ENCODE measurements at regions of chr5 and their contacts with region 1.

Region 1: DNA sequence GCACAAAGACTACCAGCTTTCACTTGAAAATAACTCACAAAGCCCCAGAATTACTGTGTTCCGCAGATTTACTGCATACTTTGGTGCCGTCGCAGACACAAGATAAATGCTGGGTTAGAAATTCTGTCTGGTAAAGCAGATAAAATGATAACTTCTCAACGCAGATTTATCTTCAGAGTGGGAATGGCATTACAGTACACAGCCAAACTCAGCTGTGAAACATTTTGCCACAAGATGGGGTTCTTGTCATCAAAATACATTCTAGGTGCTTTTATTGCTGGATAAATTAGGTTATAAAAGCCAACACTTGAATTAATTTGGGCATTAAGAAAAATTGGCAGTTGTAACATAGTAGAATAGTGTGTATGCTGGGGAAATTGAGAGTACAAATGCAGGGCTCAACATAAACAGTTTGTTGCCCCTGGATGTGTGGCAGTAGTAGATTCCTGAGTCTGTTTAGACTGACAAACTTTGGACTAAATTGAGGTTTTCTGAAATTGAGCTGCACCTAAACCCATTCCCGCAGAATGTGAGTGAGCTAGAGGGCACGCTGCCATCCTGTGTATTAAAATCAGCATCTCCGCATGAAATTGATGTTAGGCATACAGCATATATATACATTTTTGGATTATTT is 61.1 kb downstream of the LMNB1 start:
- DNase-seq: no peak
- ATAC-seq: peak; percentile 64

Region 2: GRCh38 chr5:126477294-126478117 is 360.5 kb before region 1 on chr5:
- intact Hi-C with region 1: no loop called
- DNase-seq: no peak
- ATAC-seq: no peak

Region 3: DNA sequence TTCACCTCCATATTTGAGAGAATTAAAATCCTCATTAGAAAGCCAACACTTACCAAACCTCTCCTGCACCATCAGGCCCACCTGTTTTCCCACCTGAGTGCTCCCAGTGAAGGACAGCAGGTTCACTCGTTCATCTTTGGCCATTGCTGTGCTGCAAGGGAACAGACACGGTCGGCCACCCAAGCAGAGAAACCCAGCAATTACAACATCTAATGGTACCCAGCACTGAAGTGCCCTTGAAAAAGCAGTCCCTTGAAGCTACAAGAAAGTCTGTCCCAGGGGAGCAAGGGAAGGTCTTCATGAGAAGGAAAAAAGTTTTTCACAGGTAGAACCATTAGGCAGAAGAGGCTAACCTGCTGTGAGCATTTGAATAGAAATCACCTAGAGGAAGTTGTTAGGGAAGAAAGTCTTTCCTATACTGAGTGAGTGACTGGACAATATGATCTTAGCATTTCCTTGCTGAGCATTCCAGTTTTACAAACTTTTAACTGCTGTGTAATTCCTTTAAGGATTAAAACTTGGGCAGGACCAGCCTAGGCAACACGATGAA is 269.7 kb before region 1 on chr5:
- intact Hi-C with region 1: no loop called
- DNase-seq: no peak
- ATAC-seq: no peak

Region 4: GRCh38 chr5:126938466-126938865 is 100.4 kb after region 1 on chr5:
- intact Hi-C with region 1: no loop called
- DNase-seq: no peak
- ATAC-seq: peak; percentile 26

Region 5: GRCh38 chr5:127313847-127314473 is 475.9 kb after region 1 on chr5:
- intact Hi-C with region 1: loop called (anchors 5 kb)
- DNase-seq: peak; percentile 67
- ATAC-seq: peak; percentile 51

Region 6: GRCh38 chr5:127867389-127867788 is 1029.4 kb after region 1 on chr5:
- intact Hi-C with region 1: no loop called
- DNase-seq: no peak
- ATAC-seq: no peak

Measured in left ventricle myocardium superior (tissue), 1 donor.